ENCODE measurements at regions of chr11 and their contacts with region 1.

Region 1: GRCh38 chr11:7571640-7572000 is 57.8 kb downstream of the PPFIBP2 start:
- DNase-seq: peak; percentile 73
- H3K4me3 ChIP-seq: no peak overlapping the region
- H3K27ac ChIP-seq: peak overlapping the region in 2 of 4 donors; percentile 12 to 35
- H3K4me1 ChIP-seq: peaks cover 0 to 19% (median 15%) of the 10 kb centered on the region in 4 donors
- H3K27me3 ChIP-seq: peaks cover 0 to 2% (median 0%) of the 10 kb centered on the region in 3 donors
- CTCF ChIP-seq: peak; percentile 65 to 91 (median 88)
- EP300 ChIP-seq: no peak
- POLR2A ChIP-seq: no peak

Region 2: GRCh38 chr11:7524462-7525235 is 47.0 kb before region 1 on chr11:
- intact Hi-C with region 1: no loop called
- DNase-seq: no peak
- H3K4me3 ChIP-seq: no peak overlapping the region
- H3K27ac ChIP-seq: peak overlapping the region in 1 of 4 donors; percentile 14
- H3K4me1 ChIP-seq: peaks cover 0 to 5% (median 2%) of the 10 kb centered on the region in 4 donors
- H3K27me3 ChIP-seq: no peaks in the 10 kb centered on the region
- CTCF ChIP-seq: no peak
- EP300 ChIP-seq: no peak
- POLR2A ChIP-seq: no peak

Region 3: DNA sequence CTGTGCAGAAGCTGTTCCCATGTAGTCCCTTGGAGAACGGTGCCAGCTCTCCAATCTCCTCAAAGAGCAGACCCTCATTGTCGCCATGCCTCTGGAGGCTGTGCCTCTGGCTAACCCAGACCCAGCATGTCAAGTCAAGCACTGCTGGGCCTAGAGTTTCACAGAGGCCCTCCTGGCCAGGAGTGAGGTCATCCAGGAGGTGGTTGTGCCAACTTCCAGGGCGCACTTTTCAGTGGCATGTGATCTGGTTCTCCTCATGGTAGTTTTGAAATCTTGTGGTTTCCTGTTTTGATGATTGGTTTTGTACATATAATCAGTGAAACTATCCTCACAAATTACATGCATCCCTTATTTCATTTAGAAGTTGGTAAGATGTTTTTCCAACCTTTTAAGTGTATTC is 21.1 kb after region 1 on chr11:
- intact Hi-C with region 1: no loop called
- DNase-seq: no peak
- H3K4me3 ChIP-seq: no peak overlapping the region
- H3K27ac ChIP-seq: no peak overlapping the region
- H3K4me1 ChIP-seq: no peaks in the 10 kb centered on the region
- H3K27me3 ChIP-seq: no peaks in the 10 kb centered on the region
- CTCF ChIP-seq: no peak
- EP300 ChIP-seq: no peak
- POLR2A ChIP-seq: no peak

Region 4: DNA sequence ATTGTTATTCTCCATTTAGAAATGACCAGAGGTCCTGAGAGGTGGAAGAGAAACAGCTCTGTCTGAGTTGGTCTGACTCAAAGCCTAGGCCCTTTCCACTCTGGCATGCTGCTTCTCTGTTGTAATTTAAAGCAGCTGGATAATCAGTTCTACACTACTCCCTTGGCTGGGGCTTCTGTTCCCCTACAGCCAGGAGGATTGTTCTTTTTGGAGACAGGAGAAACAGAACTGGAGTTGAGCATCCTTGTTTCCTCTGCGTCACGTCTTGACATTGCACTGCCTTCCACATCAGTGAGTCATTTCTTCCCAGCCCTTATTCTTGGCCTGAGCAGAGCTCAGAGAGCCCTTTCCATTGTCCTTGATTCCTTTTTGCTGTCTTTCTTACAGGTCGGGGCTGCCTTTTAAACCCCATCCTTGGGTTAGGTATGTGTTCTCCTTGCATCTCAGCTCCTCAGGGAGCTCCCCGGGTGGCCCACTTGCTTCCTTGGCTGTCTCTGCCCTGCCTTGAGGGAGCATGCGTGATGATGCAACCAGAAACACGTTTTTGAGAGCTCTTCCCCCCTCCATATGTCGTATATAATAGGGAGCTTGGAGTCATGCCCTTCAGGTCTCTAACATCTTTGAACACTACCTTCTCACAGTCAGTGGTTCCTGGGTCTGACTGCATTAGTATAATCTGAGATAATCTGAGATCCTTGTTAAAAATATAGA is 66.0 kb after region 1 on chr11:
- intact Hi-C with region 1: no loop called
- DNase-seq: peak; percentile 88
- H3K4me3 ChIP-seq: no peak overlapping the region
- H3K27ac ChIP-seq: peak overlapping the region; percentile 44 to 70 (median 58)
- H3K4me1 ChIP-seq: no peaks in the 10 kb centered on the region
- H3K27me3 ChIP-seq: no peaks in the 10 kb centered on the region
- CTCF ChIP-seq: no peak
- EP300 ChIP-seq: no peak
- POLR2A ChIP-seq: no peak

Region 5: DNA sequence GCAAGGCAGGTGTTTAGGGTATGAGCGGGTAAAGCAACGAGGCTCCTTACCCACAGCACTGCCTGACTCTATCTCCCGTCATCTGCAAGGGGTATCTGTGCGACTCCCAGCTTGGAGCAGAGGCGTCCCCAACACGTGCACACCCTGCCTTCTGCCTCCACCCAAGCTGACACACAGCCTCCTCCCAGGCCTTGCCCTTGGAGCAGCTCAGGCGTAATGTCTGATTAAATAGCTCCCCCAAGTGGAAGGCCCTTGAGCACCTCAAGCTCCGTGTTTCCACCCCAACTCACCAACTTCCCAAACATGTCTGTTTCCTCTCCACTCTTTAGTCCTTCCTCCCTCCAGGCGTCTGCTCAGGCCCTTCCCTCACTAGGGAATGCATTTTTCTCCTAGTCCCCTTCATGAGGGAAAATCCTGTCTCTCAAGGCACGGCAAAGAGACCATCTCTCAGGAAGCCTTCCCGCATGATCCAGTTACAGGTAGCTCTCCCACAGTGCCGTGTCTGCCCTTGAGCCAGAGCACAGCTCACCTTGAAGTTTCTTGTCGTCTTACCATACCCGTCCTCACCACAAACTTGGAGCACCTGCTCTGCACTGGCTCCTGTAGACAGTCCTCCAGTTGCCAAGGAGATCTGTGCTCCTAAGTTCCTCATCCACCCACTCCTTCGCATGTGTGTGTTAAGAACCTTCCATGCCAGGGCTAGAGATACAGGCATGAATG is 85.8 kb after region 1 on chr11:
- intact Hi-C with region 1: loop called (anchors 2 kb)
- DNase-seq: peak; percentile 78
- H3K4me3 ChIP-seq: no peak overlapping the region
- H3K27ac ChIP-seq: no peak overlapping the region
- H3K4me1 ChIP-seq: no peaks in the 10 kb centered on the region
- H3K27me3 ChIP-seq: no peaks in the 10 kb centered on the region
- CTCF ChIP-seq: peak in 2 of 4 experiments; percentile 22 to 47
- EP300 ChIP-seq: no peak
- POLR2A ChIP-seq: no peak